ENCODE measurements at regions of chr3 and their contacts with region 1.

Region 1: GRCh38 chr3:150408221-150409102 is at the start of gene TSC22D2:
- DNase-seq: peak in 1 of 2 experiments; percentile 97
- H3K4me3 ChIP-seq: peak within 1 kb of the TSS; percentile 72 to 95 (median 90)
- H3K27ac ChIP-seq: peak within 1 kb of the TSS; percentile 79
- H3K4me1 ChIP-seq: peaks cover 0 to 3% (median 2%) of the 10 kb centered on the region in 4 experiments; a peak in 3 of 7 replicates
- H3K27me3 ChIP-seq: no peaks in the 10 kb centered on the region
- CTCF ChIP-seq: no peak; a peak in 1 of 4 replicates
- EP300 ChIP-seq: peak in 1 of 2 experiments; percentile 57; a peak in 1 of 3 replicates
- POLR2A ChIP-seq: peak; percentile 29 to 73
- RAD21 ChIP-seq: peak in 1 of 2 experiments; percentile 1; a peak in 1 of 4 replicates
- total RNA-seq, gene TSC22D2: 25.8 and 27.6 TPM in 2 replicates

Region 2: GRCh38 chr3:150303776-150304175 is 104.7 kb before region 1 on chr3:
- CTCF ChIA-PET with region 1: interaction called, 14 read pairs
- POLR2A ChIA-PET with region 1: no interaction called
- DNase-seq: no peak
- H3K4me3 ChIP-seq: no peak overlapping the region
- H3K27ac ChIP-seq: no peak overlapping the region
- H3K4me1 ChIP-seq: no peaks in the 10 kb centered on the region
- H3K27me3 ChIP-seq: no peaks in the 10 kb centered on the region
- CTCF ChIP-seq: peak; percentile 53 to 74 (median 73)
- EP300 ChIP-seq: no peak
- POLR2A ChIP-seq: no peak
- RAD21 ChIP-seq: peak; percentile 59 to 72

Region 3: DNA sequence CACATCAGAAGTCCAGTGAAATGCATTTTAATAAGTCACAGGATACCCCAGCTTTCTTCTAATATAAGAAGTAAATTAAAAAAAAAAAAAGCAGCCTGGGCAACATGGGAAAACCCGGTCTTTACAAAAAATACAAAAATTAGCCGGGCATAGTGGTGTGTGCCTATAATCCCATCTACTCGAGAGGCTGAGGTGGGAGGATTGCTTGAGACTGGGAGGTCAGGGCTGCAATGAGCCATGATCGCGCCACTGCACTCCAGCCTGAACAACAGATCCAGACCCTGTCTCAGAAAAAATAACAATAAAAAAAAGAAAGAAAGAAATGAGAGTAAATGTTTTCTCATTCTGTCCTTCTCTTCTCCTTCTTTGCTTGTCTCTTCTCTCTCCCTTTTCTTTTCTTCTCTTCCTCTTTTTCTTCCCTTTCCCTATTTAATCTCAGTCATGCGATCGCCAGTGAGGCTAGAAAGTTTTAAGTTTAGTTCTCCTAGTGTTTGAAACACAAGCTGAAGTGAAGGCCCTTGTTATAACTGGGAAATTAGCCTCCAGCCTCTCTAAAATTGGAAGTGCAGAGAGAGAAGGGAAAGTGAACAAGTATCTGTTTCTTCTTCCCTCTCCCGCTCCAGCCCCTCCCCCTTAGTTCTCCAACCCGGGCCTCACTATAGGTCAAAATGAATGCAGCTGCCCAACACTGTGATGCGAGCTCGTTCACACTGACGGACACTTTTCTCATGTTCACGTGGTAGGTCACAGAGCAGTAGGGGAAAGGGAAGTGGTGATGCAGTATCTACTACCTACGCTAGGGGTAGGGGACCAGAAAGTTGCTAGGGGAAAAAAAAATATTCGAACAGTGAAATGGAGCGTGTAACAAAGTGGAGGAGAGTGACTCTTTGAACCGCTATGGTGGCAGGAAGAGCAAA is 23.9 kb before region 1 on chr3:
- CTCF ChIA-PET with region 1: interaction called, 7 read pairs
- POLR2A ChIA-PET with region 1: interaction called, 11 read pairs
- DNase-seq: no peak
- H3K4me3 ChIP-seq: no peak overlapping the region
- H3K27ac ChIP-seq: no peak overlapping the region
- H3K4me1 ChIP-seq: peaks cover 0 to 6% (median 1%) of the 10 kb centered on the region in 4 experiments; a peak in 4 of 7 replicates
- H3K27me3 ChIP-seq: no peaks in the 10 kb centered on the region
- CTCF ChIP-seq: peak in 2 of 3 experiments; percentile 15 to 51; a peak in 2 of 4 replicates
- EP300 ChIP-seq: no peak
- POLR2A ChIP-seq: no peak
- RAD21 ChIP-seq: peak; percentile 17 to 34; a peak in 2 of 4 replicates

Region 4: DNA sequence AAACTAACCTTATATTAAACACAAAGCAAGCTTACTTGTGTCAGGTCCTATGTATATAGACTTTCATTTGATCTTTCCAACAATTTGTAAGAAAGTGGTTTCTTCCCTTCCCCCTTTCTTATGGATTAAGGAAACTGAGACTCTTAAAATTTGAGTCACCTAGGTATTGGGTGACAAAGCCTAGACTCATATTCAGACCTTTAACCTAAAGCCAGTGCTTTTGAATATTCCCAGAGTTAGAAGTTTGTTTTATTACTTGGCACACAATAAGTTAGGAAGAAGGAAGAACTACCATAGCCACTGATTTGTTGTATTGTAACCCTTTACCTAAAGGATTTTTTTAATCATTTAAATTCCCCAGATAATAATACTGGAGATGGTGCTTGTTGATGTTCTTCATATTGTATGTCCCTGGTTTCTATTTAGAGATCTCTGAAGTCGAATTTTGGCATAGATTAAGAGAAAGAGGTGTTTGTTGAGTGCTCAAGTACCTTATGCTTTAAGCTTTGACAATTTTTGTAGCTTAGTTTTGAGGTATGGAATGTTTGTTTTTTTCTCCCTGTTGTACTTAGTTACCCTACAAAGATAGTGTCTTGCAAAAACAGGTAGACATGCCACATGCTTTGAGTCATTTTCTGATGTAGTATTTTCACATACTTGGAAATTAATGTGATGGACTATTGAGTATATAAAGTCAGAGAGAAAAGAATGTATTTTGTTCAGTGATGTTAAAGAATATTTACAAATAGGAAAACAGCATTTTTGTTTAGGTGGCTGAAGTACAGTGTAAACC is 10.8 kb after region 1 on chr3:
- CTCF ChIA-PET with region 1: interaction called, 11 read pairs
- POLR2A ChIA-PET with region 1: interaction called, 18 read pairs
- DNase-seq: no peak
- H3K4me3 ChIP-seq: no peak overlapping the region
- H3K27ac ChIP-seq: no peak overlapping the region
- H3K4me1 ChIP-seq: peaks cover 0 to 1% (median under 1%) of the 10 kb centered on the region in 4 experiments; a peak in 2 of 7 replicates
- H3K27me3 ChIP-seq: no peaks in the 10 kb centered on the region
- CTCF ChIP-seq: no peak
- EP300 ChIP-seq: no peak
- POLR2A ChIP-seq: no peak
- RAD21 ChIP-seq: no peak

Region 5: GRCh38 chr3:150428562-150428961 is 20.1 kb after region 1 on chr3:
- CTCF ChIA-PET with region 1: interaction called, 9 read pairs
- POLR2A ChIA-PET with region 1: interaction called, 15 read pairs
- DNase-seq: no peak
- H3K4me3 ChIP-seq: no peak overlapping the region
- H3K27ac ChIP-seq: no peak overlapping the region
- H3K4me1 ChIP-seq: no peaks in the 10 kb centered on the region; a peak in 1 of 7 replicates
- H3K27me3 ChIP-seq: no peaks in the 10 kb centered on the region
- CTCF ChIP-seq: no peak
- EP300 ChIP-seq: no peak
- POLR2A ChIP-seq: no peak
- RAD21 ChIP-seq: no peak

Region 6: DNA sequence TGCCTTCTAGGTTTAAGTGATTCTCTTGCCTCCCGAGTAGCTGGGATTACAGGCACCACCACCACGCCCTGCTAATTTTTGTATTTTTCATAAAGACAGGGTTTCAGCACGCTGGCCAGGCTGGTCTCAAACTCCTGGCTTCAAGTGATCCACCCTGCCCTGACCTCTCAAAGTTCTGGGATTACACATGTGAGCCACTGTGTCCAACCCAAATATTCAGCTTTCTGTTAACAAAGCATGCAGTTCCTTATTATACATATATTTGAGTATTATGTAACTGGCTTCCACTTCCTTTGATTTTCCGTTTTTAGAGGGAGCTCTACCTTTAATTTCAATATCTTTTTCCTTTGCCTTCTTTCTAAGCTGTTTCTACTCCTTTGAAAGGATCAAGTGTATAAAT is 25.8 kb after region 1 on chr3:
- CTCF ChIA-PET with region 1: interaction called, 6 read pairs
- POLR2A ChIA-PET with region 1: interaction called, 15 read pairs
- DNase-seq: no peak
- H3K4me3 ChIP-seq: no peak overlapping the region
- H3K27ac ChIP-seq: no peak overlapping the region
- H3K4me1 ChIP-seq: peaks cover 0 to 10% (median 0%) of the 10 kb centered on the region in 4 experiments; a peak in 2 of 7 replicates
- H3K27me3 ChIP-seq: no peaks in the 10 kb centered on the region
- CTCF ChIP-seq: no peak
- EP300 ChIP-seq: no peak
- POLR2A ChIP-seq: no peak
- RAD21 ChIP-seq: no peak

Region 7: DNA sequence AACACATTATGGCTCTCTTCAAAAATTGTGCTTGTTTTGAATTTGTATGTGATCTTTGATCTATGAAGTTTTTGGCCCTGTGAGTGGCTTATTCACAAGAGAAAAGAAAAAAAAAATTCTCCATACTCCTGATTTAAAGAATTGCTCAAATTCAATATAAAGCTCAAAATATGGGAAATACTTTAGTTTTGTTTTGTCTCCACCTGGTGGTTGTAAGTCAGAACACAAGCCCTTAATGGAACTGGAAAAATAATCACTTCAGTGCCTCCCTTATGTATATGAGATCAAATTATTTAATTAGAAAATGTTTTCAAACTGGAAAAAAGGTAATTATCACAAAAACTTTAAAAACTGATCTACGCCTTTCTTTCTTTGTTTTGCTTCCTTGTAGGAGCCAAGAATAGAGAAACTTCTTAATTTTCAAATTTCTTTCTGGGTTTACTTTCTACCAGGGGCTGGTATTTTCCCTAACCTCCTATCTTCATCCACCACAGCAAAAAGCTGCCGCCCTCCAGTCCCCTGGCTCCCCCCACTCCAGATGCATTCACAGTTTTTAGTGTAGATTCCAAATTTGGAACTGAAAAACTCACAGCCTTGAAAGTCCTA is 87.2 kb after region 1 on chr3:
- CTCF ChIA-PET with region 1: interaction called, 49 read pairs
- POLR2A ChIA-PET with region 1: interaction called, 3 read pairs
- DNase-seq: no peak
- H3K4me3 ChIP-seq: no peak overlapping the region
- H3K27ac ChIP-seq: no peak overlapping the region
- H3K4me1 ChIP-seq: no peaks in the 10 kb centered on the region
- H3K27me3 ChIP-seq: peaks cover 0 to 1% (median 0%) of the 10 kb centered on the region in 4 experiments; a peak in 1 of 7 replicates
- CTCF ChIP-seq: peak in 2 of 3 experiments; percentile 44 to 54; a peak in 2 of 4 replicates
- EP300 ChIP-seq: no peak
- POLR2A ChIP-seq: no peak
- RAD21 ChIP-seq: peak; percentile 75 to 80

Measured in H1 (cell line).